Heart left ventricle (tissue), 16 donors: ENCODE measurements at regions of chr2 and their contacts with region 1.

Region 1: DNA sequence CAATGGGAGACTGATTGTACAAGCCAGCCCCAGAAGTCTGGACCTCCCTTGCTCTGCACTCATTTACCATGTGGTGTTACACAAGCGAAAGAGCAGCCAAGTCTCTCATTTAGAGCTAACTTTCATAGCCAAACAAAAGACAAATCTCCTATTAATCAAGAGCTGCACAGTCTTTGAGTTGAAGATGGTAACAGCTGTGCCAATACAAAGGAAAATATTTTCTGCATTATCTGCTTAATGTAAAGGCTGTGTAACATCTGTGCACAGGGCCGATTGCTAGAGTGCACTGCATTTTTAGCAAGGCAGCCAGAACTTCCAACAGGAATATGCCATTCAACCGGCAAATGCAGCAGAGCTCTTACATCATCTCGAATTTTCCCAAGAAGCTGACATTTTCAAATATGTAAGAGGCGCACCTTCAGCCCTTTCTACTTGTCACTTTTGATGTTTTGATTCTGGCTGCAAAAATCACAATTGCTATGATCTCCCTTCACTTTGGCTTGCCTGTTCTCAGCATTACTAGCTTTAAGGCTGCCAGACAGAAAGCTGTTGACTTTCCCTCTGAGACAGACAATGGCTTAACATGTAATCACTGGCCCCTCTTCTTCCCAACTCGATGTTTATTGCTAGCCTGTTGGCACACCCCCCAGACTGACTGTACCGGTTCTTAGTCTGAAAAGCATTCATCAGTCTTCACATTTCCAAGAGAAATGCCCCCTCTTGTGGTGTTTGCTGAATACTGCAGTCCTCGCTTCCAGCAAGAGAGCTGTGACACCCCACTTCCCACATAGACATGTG is 96.9 kb upstream of the TANK start:
- DNase-seq: peak in 4 of 5 donors; percentile 59 to 69 (median 66)
- ATAC-seq: peak in 3 of 4 donors; percentile 80 to 84 (median 82)
- H3K4me3 ChIP-seq: peak overlapping the region in 3 of 12 donors; percentile 2 to 20 (median 2)
- H3K27ac ChIP-seq: no peak overlapping the region
- H3K4me1 ChIP-seq: peaks cover 0 to 9% (median 0%) of the 10 kb centered on the region in 12 donors
- H3K27me3 ChIP-seq: no peaks in the 10 kb centered on the region
- CTCF ChIP-seq: peak; percentile 74 to 94 (median 86)
- POLR2A ChIP-seq: no peak

Region 2: GRCh38 chr2:161160226-161161069 is 97.1 kb after region 1 on chr2 and contains the start of gene TANK:
- intact Hi-C with region 1: loop called in 1 of 10 experiments (anchors 10 kb)
- DNase-seq: peak; percentile 91 to 95 (median 94)
- ATAC-seq: peak; percentile 98 to 99 (median 99)
- H3K4me3 ChIP-seq: peak within 1 kb of the TSS; percentile 50 to 98 (median 90)
- H3K27ac ChIP-seq: peak within 1 kb of the TSS; percentile 87 to 99 (median 93)
- H3K4me1 ChIP-seq: peaks cover 2 to 52% (median 28%) of the 10 kb centered on the region in 12 donors
- H3K27me3 ChIP-seq: no peaks in the 10 kb centered on the region
- CTCF ChIP-seq: peak in 1 of 12 donors; percentile 18
- POLR2A ChIP-seq: peak; percentile 87 to 88
- total RNA-seq, gene TANK: 21.5 to 58.5 (median 32.4) TPM